Activated CD8-positive, alpha-beta T cell treated with anti-CD3 and anti-CD28 coated beads, Interleukin-2, amount 10 ng/mL, durations not matched to agents 7 days and 5 days (primary cell): ENCODE measurements at regions of chr3 and their contacts with region 1.

Region 1: GRCh38 chr3:14402304-14402811 is at the start of gene SLC6A6:
- DNase-seq: peak; percentile 95
- ATAC-seq: peak; percentile 80
- H3K4me3 Mint-ChIP-seq: peak within 1 kb of the TSS; percentile 92
- H3K27ac Mint-ChIP-seq: peak within 1 kb of the TSS; percentile 98
- H3K4me1 Mint-ChIP-seq: peaks cover 58% of the 10 kb centered on the region
- H3K27me3 Mint-ChIP-seq: no peaks in the 10 kb centered on the region
- total RNA-seq, gene SLC6A6: 36.8 to 37.9 TPM

Region 2: GRCh38 chr3:14274999-14275961 is 127.1 kb before region 1 on chr3:
- CTCF ChIA-PET with region 1: no interaction called
- POLR2A ChIA-PET with region 1: no interaction called
- DNase-seq: peak; percentile 24
- ATAC-seq: no peak
- H3K4me3 Mint-ChIP-seq: no peak overlapping the region
- H3K27ac Mint-ChIP-seq: no peak overlapping the region
- H3K4me1 Mint-ChIP-seq: no peaks in the 10 kb centered on the region
- H3K27me3 Mint-ChIP-seq: peaks cover 8% of the 10 kb centered on the region

Region 3: GRCh38 chr3:14426063-14426620 is 23.8 kb after region 1 on chr3:
- CTCF ChIA-PET with region 1: interaction called, 18 read pairs
- POLR2A ChIA-PET with region 1: interaction called, 45 read pairs
- DNase-seq: peak; percentile 79
- ATAC-seq: peak; percentile 76
- H3K4me3 Mint-ChIP-seq: peak overlapping the region; percentile 56
- H3K27ac Mint-ChIP-seq: peak overlapping the region; percentile 82
- H3K4me1 Mint-ChIP-seq: peaks cover 91% of the 10 kb centered on the region
- H3K27me3 Mint-ChIP-seq: no peaks in the 10 kb centered on the region

Region 4: GRCh38 chr3:14431892-14432834 is 29.8 kb after region 1 on chr3:
- CTCF ChIA-PET with region 1: interaction called, 18 read pairs
- POLR2A ChIA-PET with region 1: interaction called, 45 read pairs
- DNase-seq: peak; percentile 98
- ATAC-seq: peak; percentile 91
- H3K4me3 Mint-ChIP-seq: peak overlapping the region; percentile 76
- H3K27ac Mint-ChIP-seq: peak overlapping the region; percentile 99
- H3K4me1 Mint-ChIP-seq: peaks cover 88% of the 10 kb centered on the region
- H3K27me3 Mint-ChIP-seq: no peaks in the 10 kb centered on the region

Region 5: DNA sequence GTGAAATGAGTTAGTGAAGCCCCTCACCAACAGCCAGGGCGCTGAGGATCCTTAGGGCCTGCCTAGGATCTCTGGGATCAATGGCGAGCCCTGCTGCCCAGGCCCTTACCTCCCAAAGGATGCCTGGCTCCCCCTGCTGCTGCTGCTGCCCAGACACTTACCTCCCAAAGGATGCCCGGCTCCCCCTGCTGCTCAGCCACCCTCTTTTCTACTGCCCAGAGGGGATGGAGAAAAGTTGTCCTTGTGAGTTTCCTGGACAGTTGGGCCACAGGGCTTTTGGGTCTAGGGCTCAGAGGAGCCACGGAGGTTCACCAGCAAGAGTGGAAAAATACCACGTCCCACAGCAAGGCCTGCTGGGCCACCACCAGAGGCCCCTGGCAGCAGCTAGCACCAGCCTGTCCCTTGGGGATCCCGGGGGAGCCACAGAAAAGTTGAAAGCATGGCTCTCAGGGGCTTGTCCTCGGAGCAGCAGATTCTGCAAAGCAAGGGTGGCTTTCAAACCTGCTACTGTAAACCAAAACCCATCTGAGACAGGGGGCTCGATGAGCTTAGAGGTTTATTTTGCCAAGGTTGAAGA is 59.5 kb after region 1 on chr3:
- CTCF ChIA-PET with region 1: interaction called, 10 read pairs
- POLR2A ChIA-PET with region 1: interaction called, 6 read pairs
- DNase-seq: peak; percentile 59
- ATAC-seq: peak; percentile 77
- H3K4me3 Mint-ChIP-seq: no peak overlapping the region
- H3K27ac Mint-ChIP-seq: peak overlapping the region; percentile 65
- H3K4me1 Mint-ChIP-seq: peaks cover 12% of the 10 kb centered on the region
- H3K27me3 Mint-ChIP-seq: no peaks in the 10 kb centered on the region

Region 6: DNA sequence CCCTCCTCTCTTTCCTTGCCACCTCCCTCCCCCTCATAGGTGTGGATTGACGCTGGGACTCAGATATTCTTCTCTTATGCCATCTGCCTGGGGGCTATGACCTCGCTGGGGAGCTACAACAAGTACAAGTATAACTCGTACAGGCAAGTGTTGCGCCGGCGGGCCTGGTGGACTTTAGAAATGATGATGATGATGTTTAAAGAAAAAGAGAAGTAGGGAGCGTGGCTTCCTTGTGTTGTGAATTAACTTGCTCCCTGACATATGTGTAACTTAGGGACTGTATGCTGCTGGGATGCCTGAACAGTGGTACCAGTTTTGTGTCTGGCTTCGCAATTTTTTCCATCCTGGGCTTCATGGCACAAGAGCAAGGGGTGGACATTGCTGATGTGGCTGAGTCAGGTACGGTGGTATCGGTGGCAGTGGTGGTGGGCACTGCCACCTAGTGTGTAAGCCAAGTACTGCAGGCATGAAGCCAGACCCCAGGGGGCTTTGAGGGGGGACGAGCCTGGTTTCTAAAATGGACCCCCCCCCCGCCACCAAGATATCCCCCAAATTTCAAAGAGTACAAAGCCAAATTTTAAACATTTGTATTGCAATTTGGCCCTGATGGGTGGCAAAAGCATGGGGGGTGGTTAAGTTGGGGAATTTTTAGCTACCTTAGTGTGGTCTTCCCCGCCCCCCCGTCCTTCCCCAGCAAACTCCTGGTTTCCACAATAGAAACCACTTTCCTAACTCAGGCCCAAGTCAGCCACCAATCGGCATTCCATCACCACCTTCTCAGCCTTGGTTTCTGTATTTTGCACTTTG is 65.7 kb after region 1 on chr3:
- CTCF ChIA-PET with region 1: interaction called, 10 read pairs
- POLR2A ChIA-PET with region 1: interaction called, 6 read pairs
- DNase-seq: peak; percentile 44
- ATAC-seq: peak; percentile 48
- H3K4me3 Mint-ChIP-seq: no peak overlapping the region
- H3K27ac Mint-ChIP-seq: peak overlapping the region; percentile 30
- H3K4me1 Mint-ChIP-seq: peaks cover 3% of the 10 kb centered on the region
- H3K27me3 Mint-ChIP-seq: no peaks in the 10 kb centered on the region